ENCODE measurements at regions of chr6 and their contacts with region 1.

Region 1: GRCh38 chr6:144008120-144008811 is at the start of gene PLAGL1:
- DNase-seq: peak; percentile 84 to 90
- ATAC-seq: peak; percentile 88
- H3K4me3 ChIP-seq: peak within 1 kb of the TSS; percentile 48 to 73
- H3K27ac ChIP-seq: peak within 1 kb of the TSS in 1 of 2 donors; percentile 46
- H3K4me1 ChIP-seq: no peaks in the 10 kb centered on the region
- H3K27me3 ChIP-seq: peaks cover 0 to 2% of the 10 kb centered on the region in 2 donors
- total RNA-seq, gene PLAGL1: 65.5 to 101 TPM

Region 2: DNA sequence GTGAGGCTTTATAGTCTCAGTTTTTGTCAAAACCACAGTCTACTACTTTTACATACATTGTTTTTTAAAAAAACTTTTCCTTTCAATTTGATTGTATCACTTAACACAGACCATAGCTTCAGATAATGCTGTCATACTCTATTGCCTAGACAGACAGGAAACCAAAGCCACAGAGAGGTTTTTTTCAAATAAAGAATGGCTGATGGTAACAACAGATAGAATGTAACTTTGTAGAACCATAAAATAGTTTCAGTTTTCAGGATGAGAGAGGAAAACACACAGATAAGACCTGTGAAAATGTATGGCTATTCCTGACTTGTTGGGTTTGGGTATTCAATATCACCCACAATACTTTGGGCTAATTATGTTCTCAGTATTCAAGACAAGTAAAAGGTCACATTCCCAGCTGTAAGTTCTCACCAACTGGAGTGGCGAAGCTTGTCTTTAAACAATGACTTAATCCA is 1612.5 kb before region 1 on chr6:
- intact Hi-C with region 1: no loop called
- DNase-seq: no peak
- ATAC-seq: no peak
- H3K4me3 ChIP-seq: no peak overlapping the region
- H3K27ac ChIP-seq: no peak overlapping the region
- H3K4me1 ChIP-seq: no peaks in the 10 kb centered on the region
- H3K27me3 ChIP-seq: peaks cover 0 to 1% of the 10 kb centered on the region in 2 donors

Region 3: GRCh38 chr6:143842902-143843676 is 165.2 kb before region 1 on chr6 and contains the start of gene LTV1:
- intact Hi-C with region 1: loop called in 1 of 2 experiments (anchors 10 kb)
- DNase-seq: peak; percentile 98
- ATAC-seq: peak; percentile 100
- H3K4me3 ChIP-seq: peak within 1 kb of the TSS; percentile 56 to 71
- H3K27ac ChIP-seq: peak within 1 kb of the TSS; percentile 84 to 92
- H3K4me1 ChIP-seq: peaks cover 0 to 10% of the 10 kb centered on the region in 2 donors
- H3K27me3 ChIP-seq: no peaks in the 10 kb centered on the region
- total RNA-seq, gene LTV1: 16.5 to 16.7 TPM

Region 4: GRCh38 chr6:143970456-143971218 is 37.6 kb before region 1 on chr6:
- intact Hi-C with region 1: loop called in 1 of 2 experiments (anchors 5 kb)
- DNase-seq: no peak
- ATAC-seq: peak; percentile 73
- H3K4me3 ChIP-seq: no peak overlapping the region
- H3K27ac ChIP-seq: no peak overlapping the region
- H3K4me1 ChIP-seq: no peaks in the 10 kb centered on the region
- H3K27me3 ChIP-seq: no peaks in the 10 kb centered on the region